Activated CD8-positive, alpha-beta T cell treated with anti-CD3 and anti-CD28 coated beads, Interleukin-2, amount 10 ng/mL, durations not matched to agents 7 days and 5 days (primary cell): ENCODE measurements at regions of chr4 and their contacts with region 1.

Region 1: DNA sequence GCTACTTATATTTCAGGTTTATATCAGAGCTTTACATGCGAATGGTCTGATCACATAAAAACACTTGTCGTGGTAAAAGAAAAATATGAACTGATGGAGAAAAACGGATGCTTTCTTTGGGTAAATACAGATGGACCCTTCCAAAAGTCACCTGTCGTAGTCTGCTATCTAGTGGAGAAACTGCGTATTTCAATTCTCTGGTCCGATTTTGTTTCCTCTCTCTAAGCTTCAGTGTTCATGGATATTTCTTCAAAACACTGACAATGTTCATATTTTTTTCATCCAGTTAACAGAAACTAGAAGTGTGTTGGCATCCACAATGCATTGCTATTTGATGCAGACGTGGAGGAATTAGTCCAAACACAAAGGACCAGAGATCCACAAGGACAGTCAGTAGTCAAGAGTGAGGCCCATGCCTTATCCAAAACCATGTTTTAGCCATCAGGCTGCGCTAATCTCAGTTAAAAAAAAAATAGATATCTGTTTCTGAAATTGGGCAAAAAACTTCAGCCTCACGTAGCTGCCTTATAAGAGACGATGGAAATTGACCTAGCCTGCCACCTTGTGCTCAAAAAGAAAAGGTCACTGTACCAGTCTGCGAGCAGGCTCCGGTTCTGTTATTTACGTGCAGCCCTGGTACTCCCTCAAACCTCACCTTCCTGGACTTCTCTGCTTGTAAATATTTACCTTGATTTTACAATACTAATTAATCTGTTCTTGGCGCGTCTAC is 16.0 kb downstream of the MEPE start:
- DNase-seq: peak; percentile 57
- ATAC-seq: peak; percentile 94
- H3K4me3 Mint-ChIP-seq: no peak overlapping the region
- H3K27ac Mint-ChIP-seq: no peak overlapping the region
- H3K4me1 Mint-ChIP-seq: peaks cover 10% of the 10 kb centered on the region
- H3K27me3 Mint-ChIP-seq: peaks cover 27% of the 10 kb centered on the region

Region 2: DNA sequence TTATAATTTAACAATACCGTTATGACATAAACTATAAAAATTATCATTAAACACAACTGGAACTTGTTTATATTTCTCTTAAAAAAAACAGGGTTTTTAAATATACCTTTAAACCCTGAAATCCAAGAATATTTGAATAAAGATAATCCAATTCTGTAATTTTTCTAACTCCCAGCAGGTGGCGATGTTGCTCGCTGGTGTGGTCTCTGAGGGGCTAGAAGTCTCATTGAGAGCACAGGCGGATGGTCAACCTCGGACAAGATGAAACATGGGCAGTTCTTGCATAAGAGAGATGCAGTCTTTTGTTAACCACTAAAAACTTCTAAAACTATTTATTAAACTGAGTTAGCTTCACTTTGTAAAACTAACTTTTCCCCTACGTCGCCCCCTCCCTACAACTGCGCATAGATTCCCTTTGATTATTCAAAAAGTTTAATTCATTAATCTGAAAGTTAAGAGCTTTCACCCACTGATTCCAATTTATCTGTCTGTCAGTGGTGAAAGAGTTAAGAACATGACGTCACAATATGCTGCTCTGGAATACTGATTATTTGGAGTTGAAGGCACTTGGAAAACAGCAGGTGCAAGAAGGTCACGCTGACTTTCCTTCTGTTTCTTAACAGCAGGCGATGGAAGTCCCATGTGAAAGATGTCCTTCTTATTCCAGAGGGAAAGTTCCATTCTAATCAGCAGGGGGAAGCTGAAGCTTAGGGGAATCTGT is 169.2 kb before region 1 on chr4:
- CTCF ChIA-PET with region 1: interaction called, 31 read pairs
- POLR2A ChIA-PET with region 1: no interaction called
- DNase-seq: peak; percentile 50
- ATAC-seq: no peak
- H3K4me3 Mint-ChIP-seq: no peak overlapping the region
- H3K27ac Mint-ChIP-seq: no peak overlapping the region
- H3K4me1 Mint-ChIP-seq: no peaks in the 10 kb centered on the region
- H3K27me3 Mint-ChIP-seq: no peaks in the 10 kb centered on the region

Region 3: DNA sequence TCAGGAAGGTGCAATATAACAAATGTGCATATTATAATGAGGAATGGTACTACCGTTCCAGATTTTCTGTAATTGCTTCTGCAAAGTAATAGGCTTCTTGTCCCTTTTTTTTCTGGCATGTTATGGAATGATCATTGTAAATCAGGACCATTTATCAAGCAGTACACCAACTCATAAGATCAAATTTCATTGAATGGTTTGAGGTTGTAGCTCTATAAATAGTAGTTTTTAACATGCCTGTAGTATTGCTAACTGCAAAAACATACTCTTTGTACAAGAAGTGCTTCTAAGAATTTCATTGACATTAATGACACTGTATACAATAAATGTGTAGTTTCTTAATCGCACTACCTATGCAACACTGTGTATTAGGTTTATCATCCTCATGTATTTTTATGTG is 36.8 kb before region 1 on chr4:
- CTCF ChIA-PET with region 1: no interaction called
- POLR2A ChIA-PET with region 1: no interaction called
- DNase-seq: no peak
- ATAC-seq: no peak
- H3K4me3 Mint-ChIP-seq: no peak overlapping the region
- H3K27ac Mint-ChIP-seq: no peak overlapping the region
- H3K4me1 Mint-ChIP-seq: no peaks in the 10 kb centered on the region
- H3K27me3 Mint-ChIP-seq: peaks cover 4% of the 10 kb centered on the region

Region 4: DNA sequence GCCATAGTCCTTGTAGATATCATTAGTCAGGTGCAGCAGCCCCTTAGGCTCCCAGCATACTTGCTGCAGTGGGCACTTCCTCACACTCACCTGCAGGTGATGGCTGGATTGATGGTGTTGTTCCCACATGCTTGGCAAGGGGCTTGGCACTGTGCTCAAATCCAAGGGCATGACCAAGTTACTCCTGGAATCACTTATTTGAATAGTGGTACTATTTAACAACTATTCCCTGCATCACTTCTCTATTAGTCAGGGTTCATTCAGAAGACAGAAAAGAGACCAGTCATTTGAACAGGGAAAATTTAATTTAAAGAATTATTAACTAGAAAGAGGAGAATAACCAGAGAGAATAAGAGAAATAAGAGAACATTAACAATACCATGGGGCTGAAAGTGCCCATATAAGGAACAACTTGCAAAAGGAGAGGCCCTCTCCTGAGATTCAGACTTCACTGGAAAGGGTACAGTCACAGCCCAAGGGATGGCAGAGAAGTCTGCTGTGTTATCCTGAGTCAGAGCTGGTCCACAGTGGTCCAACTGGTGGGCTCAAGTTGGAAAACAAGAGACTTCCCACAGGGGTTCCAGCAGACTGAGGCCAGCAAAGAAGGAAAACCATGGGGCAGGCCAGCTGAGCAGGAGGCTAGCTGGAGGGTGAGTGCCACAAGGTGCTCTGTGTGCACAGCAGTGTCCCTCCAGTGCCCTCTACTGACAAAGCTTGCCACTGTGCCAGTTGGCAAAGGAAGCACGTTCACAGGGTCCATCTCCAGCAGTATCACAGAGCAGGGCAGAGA is 136.5 kb after region 1 on chr4:
- CTCF ChIA-PET with region 1: interaction called, 17 read pairs
- POLR2A ChIA-PET with region 1: no interaction called
- DNase-seq: peak; percentile 56
- ATAC-seq: peak; percentile 81
- H3K4me3 Mint-ChIP-seq: no peak overlapping the region
- H3K27ac Mint-ChIP-seq: no peak overlapping the region
- H3K4me1 Mint-ChIP-seq: no peaks in the 10 kb centered on the region
- H3K27me3 Mint-ChIP-seq: peaks cover 24% of the 10 kb centered on the region